Cardiac septum (tissue), 1 donor: ENCODE measurements at regions of chrX and their contacts with region 1.

Region 1: GRCh38 chrX:50643525-50644137 is 170.4 kb downstream of the SHROOM4 start:
- DNase-seq: no peak

Region 2: DNA sequence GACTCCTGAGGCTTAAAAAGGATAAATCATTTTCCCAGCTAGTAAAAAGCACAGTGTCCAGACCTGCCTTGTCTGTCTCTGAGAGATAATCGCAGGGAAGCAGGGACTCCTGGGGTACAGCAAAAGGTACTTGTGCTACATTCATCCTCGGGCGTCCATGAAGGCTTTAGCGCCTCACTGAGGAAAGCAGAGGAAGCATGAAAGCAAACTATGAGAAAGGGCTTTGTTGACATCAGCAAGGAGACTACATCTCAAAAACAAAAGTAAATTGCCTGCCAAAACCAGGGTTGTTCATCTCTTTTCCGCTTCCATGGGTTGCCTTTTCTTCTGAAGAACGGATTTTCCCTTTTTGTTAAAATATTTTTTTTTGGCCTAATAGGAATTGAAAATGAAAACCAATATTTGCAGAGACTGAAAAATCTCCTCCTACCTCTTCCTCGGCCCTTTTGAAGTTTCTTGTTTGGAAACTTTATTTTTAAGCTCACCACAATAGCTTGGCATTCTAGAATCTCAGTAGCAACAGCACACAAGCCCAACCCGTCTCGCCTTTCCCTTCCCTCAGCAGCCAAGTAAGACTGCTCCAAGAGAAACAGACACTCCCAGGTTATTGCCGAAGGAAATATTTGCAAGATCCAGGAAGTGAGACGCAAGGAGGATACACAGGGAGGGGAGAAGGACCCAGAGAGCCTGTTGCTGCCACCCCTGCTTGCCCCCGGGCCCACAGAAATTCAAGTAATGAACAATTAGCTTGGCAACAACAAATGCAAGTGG is 24.7 kb before region 1 on chrX:
- intact Hi-C with region 1: loop called (anchors 1 kb)
- DNase-seq: no peak

Region 3: DNA sequence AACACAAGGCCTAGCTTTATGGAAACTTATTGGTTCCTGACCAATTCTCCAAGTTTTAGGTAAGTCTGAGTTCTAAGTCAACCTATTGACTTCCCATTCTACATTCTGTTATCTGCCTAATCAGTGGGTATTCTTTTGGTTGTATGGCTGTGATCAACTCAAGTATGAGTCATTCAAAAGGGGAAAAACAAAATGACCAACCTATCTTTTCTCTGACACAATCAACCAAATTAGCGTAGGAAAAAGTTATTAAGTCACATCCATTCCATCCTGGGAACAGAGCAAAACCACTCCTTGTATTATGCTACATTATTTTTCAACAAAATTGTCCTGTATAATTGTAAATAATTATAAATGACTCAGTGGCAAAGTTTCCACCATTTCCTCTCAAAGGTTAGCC is 34.2 kb after region 1 on chrX:
- intact Hi-C with region 1: loop called (anchors 5 kb)
- DNase-seq: no peak